Calu3 (cell line): ENCODE measurements at regions of chr11 and their contacts with region 1.

Region 1: DNA sequence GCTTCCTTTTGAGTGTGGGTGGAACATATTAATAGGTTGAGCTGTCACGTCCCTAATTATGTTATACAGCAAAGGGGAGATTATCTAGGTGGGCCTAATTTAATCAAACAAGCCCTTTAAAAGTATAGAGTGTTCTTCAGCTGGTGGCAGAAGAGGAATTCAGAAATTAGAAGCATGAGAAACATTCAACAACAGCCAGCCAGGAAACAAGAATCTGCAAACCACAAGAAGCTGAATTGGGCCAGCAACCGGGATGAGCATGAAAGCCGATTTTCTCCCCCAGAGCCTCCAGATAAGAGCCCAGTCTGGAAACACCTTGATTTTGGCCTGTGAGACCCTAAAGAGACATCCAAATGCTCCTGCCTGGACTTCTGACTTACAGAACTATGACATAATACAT is 105.8 kb upstream of the LDLRAD3 start:
- DNase-seq: no peak
- H3K4me3 Mint-ChIP-seq: no peak overlapping the region
- H3K27ac Mint-ChIP-seq: no peak overlapping the region
- H3K4me1 Mint-ChIP-seq: no peaks in the 10 kb centered on the region
- H3K27me3 Mint-ChIP-seq: peaks cover 10% of the 10 kb centered on the region
- CTCF ChIP-seq: no peak

Region 2: GRCh38 chr11:35507688-35508087 is 330.4 kb before region 1 on chr11:
- CTCF ChIA-PET with region 1: interaction called, 10 read pairs
- intact Hi-C with region 1: no loop called
- DNase-seq: no peak
- H3K4me3 Mint-ChIP-seq: no peak overlapping the region
- H3K27ac Mint-ChIP-seq: no peak overlapping the region
- H3K4me1 Mint-ChIP-seq: no peaks in the 10 kb centered on the region
- H3K27me3 Mint-ChIP-seq: peaks cover 100% of the 10 kb centered on the region
- CTCF ChIP-seq: no peak

Region 3: DNA sequence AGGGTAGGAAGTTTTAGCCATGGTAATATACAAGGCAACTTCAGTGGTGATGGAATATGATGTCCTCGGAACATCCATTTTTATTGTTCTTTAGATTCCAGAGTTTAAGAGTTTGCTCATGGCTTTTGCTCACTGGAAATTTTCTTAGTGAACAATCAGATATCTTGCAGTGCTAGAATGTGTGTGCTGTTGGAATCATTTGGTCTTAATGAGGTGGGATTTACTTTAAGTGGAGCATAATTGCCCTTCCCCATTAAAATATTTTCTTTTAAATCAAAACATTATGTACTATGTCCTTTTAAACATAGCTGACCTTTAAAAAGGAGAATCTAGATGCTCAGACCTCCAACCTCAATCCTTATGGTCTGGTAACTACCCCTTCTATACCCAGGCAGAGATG is 28.5 kb after region 1 on chr11:
- CTCF ChIA-PET with region 1: no interaction called
- intact Hi-C with region 1: loop called (anchors 1 kb)
- DNase-seq: no peak
- H3K4me3 Mint-ChIP-seq: no peak overlapping the region
- H3K27ac Mint-ChIP-seq: no peak overlapping the region
- H3K4me1 Mint-ChIP-seq: no peaks in the 10 kb centered on the region
- H3K27me3 Mint-ChIP-seq: peaks cover 12% of the 10 kb centered on the region
- CTCF ChIP-seq: no peak